Ascending aorta (tissue), 2 donors: ENCODE measurements at regions of chr1 and their contacts with region 1.

Region 1: GRCh38 chr1:26102526-26102925 is 9.1 kb upstream of the PDIK1L start:
- DNase-seq: peak in 1 of 2 donors; percentile 7
- H3K4me3 ChIP-seq: no peak overlapping the region
- H3K27ac ChIP-seq: no peak overlapping the region
- H3K4me1 ChIP-seq: no peaks in the 10 kb centered on the region
- H3K27me3 ChIP-seq: no peaks in the 10 kb centered on the region
- CTCF ChIP-seq: no peak

Region 2: GRCh38 chr1:26145041-26145959 is 42.8 kb after region 1 on chr1:
- intact Hi-C with region 1: loop called (anchors 1 kb)
- DNase-seq: peak in 1 of 2 donors; percentile 88
- H3K4me3 ChIP-seq: no peak overlapping the region
- H3K27ac ChIP-seq: no peak overlapping the region
- H3K4me1 ChIP-seq: no peaks in the 10 kb centered on the region
- H3K27me3 ChIP-seq: peaks cover 5% of the 10 kb centered on the region
- CTCF ChIP-seq: peak; percentile 57 to 78 (median 75)

Region 3: GRCh38 chr1:26321315-26322041 is 219.0 kb after region 1 on chr1:
- intact Hi-C with region 1: loop called (anchors 5 kb)
- DNase-seq: peak; percentile 69 to 97
- H3K4me3 ChIP-seq: no peak overlapping the region
- H3K27ac ChIP-seq: no peak overlapping the region
- H3K4me1 ChIP-seq: peaks cover 0 to 3% of the 10 kb centered on the region in 2 donors
- H3K27me3 ChIP-seq: no peaks in the 10 kb centered on the region
- CTCF ChIP-seq: peak; percentile 86 to 95 (median 90)

Region 4: GRCh38 chr1:26372039-26372438 is 269.5 kb after region 1 on chr1:
- intact Hi-C with region 1: no loop called
- DNase-seq: no peak
- H3K4me3 ChIP-seq: no peak overlapping the region
- H3K27ac ChIP-seq: no peak overlapping the region
- H3K4me1 ChIP-seq: no peaks in the 10 kb centered on the region
- H3K27me3 ChIP-seq: no peaks in the 10 kb centered on the region
- CTCF ChIP-seq: no peak